CD8-positive, alpha-beta memory T cell (primary cell): ENCODE measurements at regions of chr12 and their contacts with region 1.

Region 1: DNA sequence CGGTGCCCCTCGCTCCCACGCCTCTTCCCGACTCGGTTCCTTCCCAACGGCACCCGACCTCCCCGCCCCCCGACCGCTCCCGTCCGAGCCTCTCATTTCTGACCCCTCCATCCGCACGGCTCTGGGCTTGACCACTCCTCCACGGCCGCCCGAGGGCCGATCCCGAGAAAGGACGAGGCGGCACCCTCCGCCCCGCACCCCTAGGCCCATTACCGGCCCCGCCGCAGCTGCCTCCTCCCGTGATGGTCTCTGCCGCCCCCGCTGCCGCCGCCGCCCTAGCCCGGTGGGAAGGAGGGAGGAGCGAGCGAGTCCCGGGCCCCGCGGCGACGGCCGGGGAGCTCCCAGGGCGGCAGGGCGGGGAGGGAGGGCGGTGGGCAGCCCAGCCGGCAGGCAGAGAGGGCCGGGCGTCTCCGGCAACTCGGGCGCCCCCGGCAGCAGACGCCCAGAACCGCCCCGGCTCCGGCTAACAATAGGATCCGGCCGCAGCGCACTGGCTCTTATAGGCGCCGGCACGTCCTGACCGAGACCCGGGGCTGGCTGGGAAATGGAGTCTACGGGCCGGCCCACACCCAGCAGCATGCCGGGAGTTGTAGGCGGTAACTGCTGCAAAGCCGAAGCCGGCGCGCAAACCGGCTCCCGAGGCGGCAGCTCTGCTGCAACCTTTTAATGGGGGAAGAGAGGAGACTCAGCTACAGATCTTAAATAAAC is at the start of gene CSRNP2:
- DNase-seq: peak; percentile 91 to 97 (median 94)
- H3K4me3 ChIP-seq: peak within 1 kb of the TSS; percentile 79
- H3K4me3 Mint-ChIP-seq: peak within 1 kb of the TSS; percentile 88 to 99 (median 97)
- H3K27ac ChIP-seq: peak within 1 kb of the TSS; percentile 72
- H3K27ac Mint-ChIP-seq: peak within 1 kb of the TSS; percentile 72 to 99 (median 94)
- H3K4me1 ChIP-seq: peaks cover 9% of the 10 kb centered on the region
- H3K4me1 Mint-ChIP-seq: peaks cover 27 to 50% (median 39%) of the 10 kb centered on the region in 3 donors
- H3K27me3 ChIP-seq: no peaks in the 10 kb centered on the region
- H3K27me3 Mint-ChIP-seq: peaks cover 0 to 5% of the 10 kb centered on the region in 2 donors
- total RNA-seq, gene CSRNP2: 20.5 to 21.5 TPM

Region 2: GRCh38 chr12:50715174-50715573 is 368.1 kb before region 1 on chr12:
- CTCF ChIA-PET with region 1: no interaction called
- POLR2A ChIA-PET with region 1: no interaction called
- DNase-seq: no peak
- H3K4me3 ChIP-seq: no peak overlapping the region
- H3K4me3 Mint-ChIP-seq: no peak overlapping the region
- H3K27ac ChIP-seq: no peak overlapping the region
- H3K27ac Mint-ChIP-seq: peak overlapping the region in 3 of 8 donors; percentile 2 to 46 (median 24)
- H3K4me1 ChIP-seq: no peaks in the 10 kb centered on the region
- H3K4me1 Mint-ChIP-seq: no peaks in the 10 kb centered on the region
- H3K27me3 ChIP-seq: no peaks in the 10 kb centered on the region
- H3K27me3 Mint-ChIP-seq: no peaks in the 10 kb centered on the region

Region 3: DNA sequence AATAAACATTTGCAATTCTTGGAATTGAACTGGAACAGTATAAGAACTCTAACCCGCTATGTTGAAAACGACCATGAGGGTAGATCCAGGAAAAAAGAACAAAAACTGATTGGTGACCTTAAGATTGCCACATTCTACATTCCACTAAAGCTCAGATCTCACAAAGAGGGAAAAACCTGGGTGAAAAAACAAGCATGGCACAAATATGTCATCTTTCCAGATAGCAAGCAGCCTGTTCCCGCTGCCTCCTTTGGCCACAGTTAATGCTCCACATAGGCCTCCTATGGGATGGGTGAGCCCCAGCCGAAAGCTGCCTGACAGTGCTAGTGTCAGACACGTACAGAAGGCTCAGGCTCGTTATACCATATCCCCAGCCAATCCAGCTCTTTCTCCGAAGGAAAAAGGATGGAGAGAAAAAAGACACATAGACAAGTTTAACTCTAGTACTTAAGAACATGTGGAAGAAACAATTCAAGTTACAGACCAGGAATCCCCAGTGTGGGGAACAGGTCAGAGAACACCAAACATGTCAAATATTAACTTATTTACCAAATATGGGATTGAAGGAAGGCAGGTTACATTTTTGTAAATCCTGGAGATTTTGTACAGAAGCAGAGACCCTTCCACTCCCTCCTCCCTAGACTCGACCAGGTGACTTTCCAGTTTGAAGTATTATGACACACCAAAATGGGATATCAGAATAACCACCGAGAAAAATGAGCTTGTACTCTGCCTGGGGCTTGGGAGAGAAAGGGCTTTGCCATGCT is 20.5 kb before region 1 on chr12:
- CTCF ChIA-PET with region 1: no interaction called
- POLR2A ChIA-PET with region 1: interaction called, 12 read pairs
- DNase-seq: no peak
- H3K4me3 ChIP-seq: no peak overlapping the region
- H3K4me3 Mint-ChIP-seq: no peak overlapping the region
- H3K27ac ChIP-seq: no peak overlapping the region
- H3K27ac Mint-ChIP-seq: peak overlapping the region in 3 of 8 donors; percentile 11 to 58 (median 25)
- H3K4me1 ChIP-seq: no peaks in the 10 kb centered on the region
- H3K4me1 Mint-ChIP-seq: no peaks in the 10 kb centered on the region
- H3K27me3 ChIP-seq: no peaks in the 10 kb centered on the region
- H3K27me3 Mint-ChIP-seq: no peaks in the 10 kb centered on the region